Right ventricle myocardium inferior (tissue), 1 donor: ENCODE measurements at regions of chr7 and their contacts with region 1.

Region 1: GRCh38 chr7:150514748-150515222 is at the start of gene GIMAP7:
- DNase-seq: no peak
- ATAC-seq: peak; percentile 71
- total RNA-seq, gene GIMAP7: 21.4 TPM

Region 2: GRCh38 chr7:150567169-150567568 is 52.4 kb after region 1 on chr7 and contains the start of gene GIMAP4:
- intact Hi-C with region 1: loop called (anchors 5 kb)
- DNase-seq: no peak
- ATAC-seq: peak; percentile 71
- total RNA-seq, gene GIMAP4: 38.4 TPM